ENCODE measurements at regions of chr2 and their contacts with region 1.

Region 1: DNA sequence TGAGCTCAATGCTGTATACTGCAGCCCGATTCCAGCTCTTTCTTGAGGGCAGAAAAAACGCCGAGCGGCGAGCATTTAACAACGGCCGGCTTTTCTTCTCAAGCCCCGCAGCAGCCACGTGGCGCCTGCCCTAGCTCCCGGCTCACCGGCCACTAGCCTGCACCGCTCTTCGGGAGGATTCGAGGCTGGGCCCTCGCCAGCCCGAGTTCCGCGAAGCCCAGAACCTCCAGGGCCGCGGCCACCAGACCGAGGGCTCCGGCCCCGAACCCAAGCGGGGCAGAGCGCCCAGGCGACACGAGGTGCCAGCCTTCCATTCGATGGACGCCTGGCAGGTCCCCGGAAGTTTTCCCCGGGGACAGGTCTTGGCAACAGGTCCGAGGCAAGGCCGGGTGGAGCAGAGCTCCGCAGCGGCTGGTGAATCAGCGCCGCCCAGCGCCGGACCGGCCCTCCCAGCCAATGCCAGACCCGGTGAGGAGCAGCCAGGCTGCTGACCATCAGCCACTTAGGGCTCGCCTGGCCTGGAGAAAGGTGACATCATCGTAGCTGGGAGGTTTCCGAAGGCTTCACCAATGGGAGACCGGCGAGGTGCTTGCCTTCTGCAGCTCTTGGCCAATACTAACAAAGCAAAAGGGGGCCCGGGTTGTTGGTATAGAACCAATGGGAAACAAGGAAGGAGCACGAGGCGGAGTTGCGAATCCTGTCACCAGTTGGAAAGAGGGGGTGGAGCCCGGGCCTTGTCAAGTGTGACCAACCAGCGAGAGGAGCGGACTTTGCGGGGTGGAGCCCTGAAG is 544 bp upstream of the MXD1 start:
- DNase-seq: peak; percentile 99
- ATAC-seq: peak; percentile 82
- H3K4me3 ChIP-seq: peak overlapping the region; percentile 71
- H3K27ac ChIP-seq: peak overlapping the region; percentile 89
- H3K4me1 ChIP-seq: peaks cover 29% of the 10 kb centered on the region
- H3K27me3 ChIP-seq: no peaks in the 10 kb centered on the region
- CTCF ChIP-seq: peak; percentile 43

Region 2: DNA sequence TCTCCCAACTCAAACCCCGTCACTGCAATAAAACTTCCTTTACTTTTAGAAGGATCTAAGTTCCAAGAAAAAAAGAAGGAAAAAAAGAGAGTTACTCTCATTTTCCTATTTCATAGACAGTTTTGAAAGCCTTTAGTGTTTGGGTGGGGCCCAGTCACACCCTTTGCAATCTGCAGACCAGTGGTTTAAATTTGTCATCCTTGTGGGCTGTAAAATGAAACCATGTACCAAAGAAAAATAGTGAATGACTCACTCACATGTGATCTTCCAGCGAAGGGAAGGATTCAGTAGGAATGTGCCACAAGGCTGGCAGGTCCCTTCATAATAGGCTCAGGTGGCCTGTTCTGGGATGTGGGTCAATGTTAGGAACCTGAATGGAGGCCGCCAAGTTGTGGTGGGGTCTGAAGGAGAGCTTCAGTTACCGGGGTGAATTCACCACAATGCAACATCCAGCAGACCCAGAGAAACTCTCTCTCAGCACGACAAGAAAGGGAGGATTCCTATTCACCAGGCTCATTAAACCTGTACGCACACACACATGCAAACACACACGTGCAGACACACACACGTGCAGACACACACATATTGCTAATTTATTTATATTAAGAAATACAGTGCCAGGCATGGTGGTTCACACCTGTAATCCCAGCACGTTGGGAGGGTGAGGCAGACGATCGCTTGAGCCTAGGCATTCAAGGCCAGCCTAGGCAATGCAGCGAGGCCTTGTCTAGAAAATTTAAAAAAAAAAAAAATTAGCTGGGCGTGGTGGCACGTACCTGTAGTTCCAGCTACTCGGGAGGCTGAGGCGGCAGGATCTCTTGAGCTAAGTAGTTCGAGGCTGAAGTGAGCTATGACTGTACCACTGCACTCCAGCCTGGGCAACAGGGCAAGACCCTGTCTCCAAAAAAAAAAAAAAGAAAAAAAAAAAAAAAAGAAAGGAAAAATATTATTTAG is 143.9 kb before region 1 on chr2:
- CTCF ChIA-PET with region 1: no interaction called
- POLR2A ChIA-PET with region 1: no interaction called
- intact Hi-C with region 1: no loop called
- DNase-seq: peak; percentile 94
- ATAC-seq: peak; percentile 90
- H3K4me3 ChIP-seq: peak overlapping the region; percentile 34; the same call in 1 of the 2 replicates
- H3K27ac ChIP-seq: peak overlapping the region; percentile 91
- H3K4me1 ChIP-seq: peaks cover 71% of the 10 kb centered on the region
- H3K27me3 ChIP-seq: no peaks in the 10 kb centered on the region
- CTCF ChIP-seq: no peak

Region 3: DNA sequence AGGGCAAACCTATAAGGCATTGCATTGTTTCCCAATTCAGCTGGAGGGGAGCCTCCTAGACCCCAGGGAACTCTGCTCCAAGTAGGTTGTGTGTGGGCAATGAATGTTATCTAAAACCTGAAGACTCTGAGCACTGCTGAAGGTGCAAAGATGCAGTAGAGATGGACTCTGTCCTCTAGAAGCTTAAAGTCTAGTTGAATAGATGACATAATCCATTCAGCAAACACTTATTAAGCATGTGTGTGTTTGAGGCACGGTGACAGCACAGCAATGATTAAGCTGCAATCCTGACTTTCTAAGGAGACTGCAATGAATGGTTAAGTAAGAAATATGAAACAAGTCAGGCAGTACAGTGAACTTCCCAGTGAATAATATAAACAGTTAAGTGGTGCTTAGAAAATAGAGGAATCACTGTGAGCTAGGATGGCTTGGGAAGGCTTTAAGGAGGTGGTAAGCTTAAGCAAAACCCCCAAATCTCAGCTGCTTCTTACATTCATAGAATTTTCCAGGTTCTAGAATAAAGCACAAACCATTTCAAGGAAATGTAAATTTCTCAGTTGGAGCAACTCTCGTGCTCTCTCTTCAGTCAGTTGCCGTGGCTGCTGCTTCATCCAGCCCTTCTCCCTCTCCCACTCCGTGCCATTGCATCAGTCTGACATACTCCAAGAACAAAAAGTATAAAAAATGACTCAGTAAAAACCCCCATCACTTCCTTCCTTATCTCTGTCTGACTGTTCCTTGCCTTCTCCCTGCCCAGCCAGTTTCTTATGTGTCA is 19.7 kb after region 1 on chr2:
- CTCF ChIA-PET with region 1: no interaction called
- POLR2A ChIA-PET with region 1: interaction called, 6 read pairs
- intact Hi-C with region 1: loop called (anchors 1 kb)
- DNase-seq: peak; percentile 86
- ATAC-seq: peak; percentile 77
- H3K4me3 ChIP-seq: peak overlapping the region; percentile 41
- H3K27ac ChIP-seq: peak overlapping the region; percentile 93
- H3K4me1 ChIP-seq: peaks cover 40% of the 10 kb centered on the region
- H3K27me3 ChIP-seq: no peaks in the 10 kb centered on the region
- CTCF ChIP-seq: no peak

Region 4: DNA sequence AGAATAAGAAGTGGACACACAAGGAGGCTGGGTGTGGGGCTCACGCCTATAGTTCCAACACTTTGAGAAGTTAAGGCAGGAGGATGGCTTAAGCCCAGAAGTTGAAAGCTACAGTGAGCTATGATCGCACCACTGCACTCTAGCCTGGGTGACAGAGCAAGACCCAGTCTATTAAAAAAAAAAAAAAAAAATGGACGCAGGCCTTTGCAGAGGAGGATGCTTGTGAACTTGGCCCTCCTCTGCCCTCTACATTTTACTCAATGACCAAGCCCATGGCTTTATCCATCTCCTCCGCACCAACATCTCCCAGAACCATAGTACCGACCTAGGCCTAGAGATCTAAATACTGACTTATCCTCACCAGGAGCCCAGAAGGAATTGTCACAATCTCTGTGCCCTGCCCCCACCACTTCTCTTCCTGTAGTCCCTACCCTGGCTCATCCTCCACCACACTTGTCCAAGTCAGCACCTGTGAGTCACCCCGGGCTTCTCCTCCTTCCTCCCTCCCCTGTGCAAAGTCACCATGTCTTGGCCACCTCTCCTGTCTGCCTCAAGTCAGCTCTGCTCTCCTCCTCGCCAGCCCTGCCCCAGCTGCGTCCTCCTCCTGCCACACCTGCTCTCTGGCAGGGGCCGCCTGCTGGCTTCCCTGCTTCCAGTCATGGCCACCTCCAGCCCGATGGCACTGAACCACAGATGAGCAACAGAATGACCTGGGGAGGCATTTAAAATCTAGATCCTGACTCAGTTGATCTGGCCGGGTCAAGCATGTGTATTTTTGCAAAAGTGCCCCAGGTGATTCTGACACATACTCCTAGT is 82.9 kb after region 1 on chr2:
- CTCF ChIA-PET with region 1: no interaction called
- POLR2A ChIA-PET with region 1: interaction called, 4 read pairs
- intact Hi-C with region 1: loop called (anchors 5 kb)
- DNase-seq: peak; percentile 94
- ATAC-seq: peak; percentile 95
- H3K4me3 ChIP-seq: peak overlapping the region; percentile 37; the same call in 1 of the 2 replicates
- H3K27ac ChIP-seq: peak overlapping the region; percentile 91
- H3K4me1 ChIP-seq: peaks cover 37% of the 10 kb centered on the region
- H3K27me3 ChIP-seq: no peaks in the 10 kb centered on the region
- CTCF ChIP-seq: peak; percentile 25; the same call in 1 of the 2 replicates

Region 5: DNA sequence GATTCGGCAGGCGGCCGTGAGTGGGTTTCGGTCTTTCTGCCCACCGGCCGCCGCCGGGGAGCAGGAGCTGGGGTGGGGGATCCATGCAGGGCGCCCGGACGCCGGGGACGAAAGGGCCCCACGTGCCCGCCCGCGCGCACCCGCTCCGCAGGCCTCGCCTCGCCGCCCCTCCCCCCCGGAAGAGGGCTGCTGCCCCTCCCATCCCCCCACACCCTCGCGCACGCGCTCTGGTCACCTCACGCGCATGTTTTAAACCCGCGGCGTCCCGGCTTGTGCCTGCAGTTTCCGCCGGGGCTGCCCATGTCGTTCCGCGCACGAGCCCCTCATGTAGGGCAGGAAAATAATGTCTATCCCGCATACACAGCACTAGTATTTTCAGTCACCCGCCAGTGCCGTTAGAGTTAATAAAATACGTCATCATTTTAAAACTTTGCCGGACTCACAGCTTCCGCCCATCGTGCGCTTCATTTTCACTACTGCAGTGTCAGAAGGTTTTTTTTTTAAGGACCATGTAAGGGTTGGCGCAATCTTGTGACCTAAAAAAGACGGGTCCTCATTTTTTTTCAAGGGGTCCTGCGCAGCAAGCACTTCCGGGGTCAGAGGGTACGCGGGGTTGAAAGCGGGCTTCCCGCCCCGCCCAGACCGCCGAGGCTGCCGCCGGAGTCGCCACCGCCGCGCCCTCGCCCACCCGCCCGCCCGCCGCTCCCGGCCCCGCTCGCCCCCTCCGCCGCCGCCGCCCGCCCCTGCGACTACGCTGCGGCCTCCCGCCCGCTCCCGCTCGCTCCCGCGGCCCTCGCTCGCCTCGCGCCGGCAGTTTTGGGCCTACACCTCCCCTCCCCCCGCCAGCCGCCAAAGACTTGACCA is 172.7 kb after region 1 on chr2 and contains the start of gene PCBP1:
- CTCF ChIA-PET with region 1: interaction called, 4 read pairs
- POLR2A ChIA-PET with region 1: interaction called, 4 read pairs
- intact Hi-C with region 1: loop called (anchors 1 kb)
- DNase-seq: peak; percentile 87
- ATAC-seq: peak; percentile 21
- H3K4me3 ChIP-seq: peak within 1 kb of the TSS; percentile 95
- H3K27ac ChIP-seq: peak within 1 kb of the TSS; percentile 100
- H3K4me1 ChIP-seq: peaks cover 55% of the 10 kb centered on the region
- H3K27me3 ChIP-seq: no peaks in the 10 kb centered on the region
- CTCF ChIP-seq: no peak
- total RNA-seq, gene PCBP1: 39.2 and 59.7 TPM in 2 replicates

Region 6: GRCh38 chr2:70248181-70248847 is 333.9 kb after region 1 on chr2 and contains the start of gene TIA1:
- CTCF ChIA-PET with region 1: no interaction called
- POLR2A ChIA-PET with region 1: interaction called, 5 read pairs
- intact Hi-C with region 1: loop called (anchors 10 kb)
- DNase-seq: peak; percentile 98
- ATAC-seq: peak; percentile 96
- H3K4me3 ChIP-seq: peak within 1 kb of the TSS; percentile 99
- H3K27ac ChIP-seq: peak within 1 kb of the TSS; percentile 89
- H3K4me1 ChIP-seq: peaks cover 11% of the 10 kb centered on the region
- H3K27me3 ChIP-seq: no peaks in the 10 kb centered on the region
- CTCF ChIP-seq: no peak
- total RNA-seq, gene TIA1: 82.5 and 123 TPM in 2 replicates

Measured in PC-3 (cell line).